HepG2 (cell line): ENCODE measurements at regions of chr17 and their contacts with region 1.

Region 1: DNA sequence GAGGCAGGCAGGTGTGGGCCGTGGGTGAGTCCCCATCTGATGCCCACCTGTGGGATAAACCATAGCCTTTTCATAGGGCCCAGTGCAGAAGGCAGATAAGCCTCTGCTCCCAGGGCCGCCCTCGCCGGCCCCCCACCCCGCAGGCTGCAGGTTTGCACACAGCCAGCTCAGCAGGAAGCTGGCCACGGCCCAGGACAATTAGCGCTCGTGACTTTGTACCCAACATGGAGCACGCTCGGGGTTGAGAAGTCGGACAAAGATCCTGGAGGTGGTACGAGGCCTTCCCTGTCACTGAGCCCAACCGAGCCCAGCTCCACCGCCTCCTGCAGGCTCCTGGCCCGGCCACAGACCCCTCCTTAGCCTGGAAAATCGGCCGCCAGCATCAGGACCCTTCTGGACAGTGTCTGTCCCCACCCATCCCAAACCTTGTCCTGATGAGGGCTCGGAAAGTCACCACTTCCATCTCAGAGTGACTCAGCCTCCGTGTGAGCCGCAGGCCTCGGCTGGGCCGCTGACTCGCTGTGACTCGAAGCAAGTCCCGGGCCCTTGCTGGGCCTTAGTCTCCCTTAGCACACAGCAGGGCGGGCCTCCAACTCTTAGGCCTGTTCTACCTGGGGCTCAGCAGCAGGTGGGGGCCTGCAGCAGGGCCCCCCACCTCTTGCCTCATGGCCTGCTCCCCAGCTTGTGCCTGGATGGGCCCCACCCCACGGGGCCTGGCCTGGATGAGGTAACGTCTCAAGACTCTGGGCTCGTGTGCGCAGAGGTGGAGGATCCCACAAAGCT is 22.7 kb downstream of the FAM83G start:
- DNase-seq: peak; percentile 87
- ATAC-seq: peak; percentile 84
- H3K4me3 ChIP-seq: peak overlapping the region in 1 of 3 experiments; percentile 42; a peak in 1 of 6 replicates
- H3K27ac ChIP-seq: peak overlapping the region; percentile 88
- H3K4me1 ChIP-seq: peaks cover 51% of the 10 kb centered on the region
- H3K27me3 ChIP-seq: no peaks in the 10 kb centered on the region
- CTCF ChIP-seq: peak; percentile 5; the same call in 1 of the 2 replicates
- EP300 ChIP-seq: peak in 1 of 2 experiments; percentile 51; a peak in 2 of 4 replicates
- POLR2A ChIP-seq: peak in 1 of 2 experiments; percentile 64; a peak in 3 of 4 replicates
- RAD21 ChIP-seq: peak; percentile 33; the same call in 1 of the 2 replicates

Region 2: GRCh38 chr17:18043491-18043890 is 938.3 kb before region 1 on chr17:
- CTCF ChIA-PET with region 1: no interaction called
- POLR2A ChIA-PET with region 1: no interaction called
- in situ Hi-C with region 1: no loop called
- intact Hi-C with region 1: no loop called
- DNase-seq: no peak
- ATAC-seq: no peak
- H3K4me3 ChIP-seq: no peak overlapping the region
- H3K27ac ChIP-seq: no peak overlapping the region
- H3K4me1 ChIP-seq: peaks cover 32% of the 10 kb centered on the region
- H3K27me3 ChIP-seq: no peaks in the 10 kb centered on the region; a peak in 1 of 5 replicates
- CTCF ChIP-seq: peak; percentile 20
- EP300 ChIP-seq: no peak
- POLR2A ChIP-seq: no peak
- RAD21 ChIP-seq: no peak

Region 3: GRCh38 chr17:18997650-18998196 is 15.9 kb after region 1 on chr17:
- CTCF ChIA-PET with region 1: no interaction called
- POLR2A ChIA-PET with region 1: interaction called, 22 read pairs
- in situ Hi-C with region 1: no loop called
- intact Hi-C with region 1: no loop called
- DNase-seq: no peak
- ATAC-seq: no peak
- H3K4me3 ChIP-seq: no peak overlapping the region
- H3K27ac ChIP-seq: no peak overlapping the region
- H3K4me1 ChIP-seq: peaks cover 33% of the 10 kb centered on the region
- H3K27me3 ChIP-seq: no peaks in the 10 kb centered on the region
- CTCF ChIP-seq: no peak
- EP300 ChIP-seq: no peak
- POLR2A ChIP-seq: no peak
- RAD21 ChIP-seq: no peak